HEK293T (cell line): ENCODE measurements at regions of chr14 and their contacts with region 1.

Region 1: GRCh38 chr14:93903342-93904184 is 23.6 kb upstream of the FAM181A start:
- DNase-seq: peak; percentile 44

Region 2: GRCh38 chr14:93655078-93655750 is 248.3 kb before region 1 on chr14:
- CTCF ChIA-PET with region 1: interaction called, 14 read pairs
- POLR2A ChIA-PET with region 1: no interaction called
- DNase-seq: peak; percentile 64